HepG2 (cell line): ENCODE measurements at regions of chr2 and their contacts with region 1.

Region 1: DNA sequence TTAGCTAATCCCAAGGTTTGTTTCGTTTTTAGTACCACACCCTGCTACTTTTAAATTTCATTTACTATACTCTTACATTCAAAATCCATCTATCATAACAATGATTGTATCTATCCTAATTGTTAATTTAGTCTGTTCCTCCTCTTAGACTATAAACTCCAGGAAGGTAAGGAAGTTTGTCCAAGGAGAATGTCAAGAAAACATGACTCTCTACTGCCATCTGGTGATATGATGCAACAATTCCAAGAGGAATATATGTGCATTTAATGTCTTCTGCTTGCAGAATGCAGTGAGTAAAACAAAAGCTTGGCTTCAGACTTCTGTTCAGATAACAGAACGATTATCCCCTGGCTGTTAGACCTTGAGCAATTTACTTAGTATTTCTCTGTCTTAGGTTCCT is 1267.1 kb downstream of the LRP1B start:
- DNase-seq: peak; percentile 51
- ATAC-seq: peak; percentile 79
- H3K4me3 ChIP-seq: no peak overlapping the region
- H3K27ac ChIP-seq: no peak overlapping the region
- H3K4me1 ChIP-seq: no peaks in the 10 kb centered on the region
- H3K27me3 ChIP-seq: no peaks in the 10 kb centered on the region
- CTCF ChIP-seq: peak; percentile 81
- EP300 ChIP-seq: no peak
- POLR2A ChIP-seq: no peak
- RAD21 ChIP-seq: 0 out of 2 replicates have a peak, but pooled peaks have one; percentile 23

Region 2: GRCh38 chr2:138922973-138923563 is 1940.6 kb before region 1 on chr2:
- CTCF ChIA-PET with region 1: interaction called, 10 read pairs
- POLR2A ChIA-PET with region 1: no interaction called
- in situ Hi-C with region 1: no loop called
- intact Hi-C with region 1: loop called (anchors 2 kb)
- DNase-seq: peak; percentile 40
- ATAC-seq: peak; percentile 36; the same call in 2 of the 3 replicates
- H3K4me3 ChIP-seq: no peak overlapping the region
- H3K27ac ChIP-seq: no peak overlapping the region
- H3K4me1 ChIP-seq: no peaks in the 10 kb centered on the region
- H3K27me3 ChIP-seq: no peaks in the 10 kb centered on the region
- CTCF ChIP-seq: peak; percentile 59
- EP300 ChIP-seq: no peak
- POLR2A ChIP-seq: no peak
- RAD21 ChIP-seq: no peak

Region 3: DNA sequence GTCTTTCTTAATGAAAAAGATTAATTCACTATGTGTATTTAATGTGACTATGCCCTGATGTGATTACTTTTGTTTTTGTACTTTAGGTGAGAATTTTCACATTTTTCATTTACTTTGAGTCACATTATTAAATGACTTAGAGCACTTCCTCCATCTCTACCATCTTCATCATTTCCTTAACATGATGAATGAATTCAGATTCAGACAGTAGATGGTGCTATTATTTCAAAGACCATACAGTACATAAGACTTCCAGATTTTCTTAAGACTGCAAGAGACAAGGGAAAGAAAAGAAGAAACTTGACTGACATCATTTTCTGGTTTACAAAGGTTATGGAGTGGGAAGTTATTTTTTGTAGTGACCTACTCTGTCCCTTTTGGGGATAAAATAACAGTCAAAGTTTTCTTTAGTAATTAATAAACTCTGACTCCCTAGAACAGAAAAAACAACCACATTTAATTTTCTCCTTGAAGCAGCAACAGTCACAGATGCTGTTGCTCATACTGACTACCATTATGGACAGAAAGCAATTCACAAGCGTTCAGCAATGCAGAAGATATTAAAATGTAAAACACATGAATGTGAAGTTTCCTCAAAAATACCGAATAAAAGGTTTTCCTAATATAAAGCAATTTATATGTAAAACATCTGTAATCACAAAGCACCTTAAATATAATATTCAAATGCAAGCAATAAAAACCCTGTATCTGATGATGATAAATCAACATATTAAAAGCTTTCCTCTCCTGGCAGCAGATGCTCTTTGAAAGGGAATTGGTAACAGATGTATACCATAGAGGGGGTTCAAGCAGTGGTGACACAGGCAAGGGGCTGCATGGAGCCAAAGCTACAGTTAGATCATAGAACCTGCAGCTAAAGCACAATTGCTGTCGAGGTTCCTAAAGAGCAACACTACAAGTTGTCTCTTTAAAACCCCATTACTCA is 1072.6 kb before region 1 on chr2:
- CTCF ChIA-PET with region 1: no interaction called
- POLR2A ChIA-PET with region 1: no interaction called
- in situ Hi-C with region 1: loop called (anchors 25 kb)
- intact Hi-C with region 1: loop called (anchors 5 kb)
- DNase-seq: no peak
- ATAC-seq: peak; percentile 34; the same call in 1 of the 3 replicates
- H3K4me3 ChIP-seq: no peak overlapping the region
- H3K27ac ChIP-seq: no peak overlapping the region
- H3K4me1 ChIP-seq: no peaks in the 10 kb centered on the region
- H3K27me3 ChIP-seq: no peaks in the 10 kb centered on the region
- CTCF ChIP-seq: 0 out of 2 replicates have a peak, but pooled peaks have one; percentile 24
- EP300 ChIP-seq: no peak
- POLR2A ChIP-seq: no peak
- RAD21 ChIP-seq: no peak

Region 4: DNA sequence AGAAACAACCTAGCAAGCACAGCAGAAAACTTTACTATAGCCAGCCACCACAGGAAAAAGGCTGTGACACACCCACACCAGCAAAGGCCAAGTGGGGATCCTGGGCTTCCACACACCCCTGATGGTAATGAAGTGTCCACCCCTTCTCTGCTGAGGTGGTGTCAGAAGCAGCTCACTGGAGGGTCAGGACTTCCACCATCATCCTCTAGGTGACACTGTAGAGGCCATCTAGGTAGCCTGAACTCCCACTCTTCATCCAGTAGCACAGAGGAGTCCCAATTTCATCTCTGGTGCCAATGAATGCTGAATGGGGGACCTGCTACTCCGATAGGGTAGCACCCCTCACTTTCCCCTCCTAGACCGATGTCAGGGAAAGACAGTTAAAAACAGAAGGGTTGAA is 277.3 kb before region 1 on chr2:
- CTCF ChIA-PET with region 1: interaction called, 4 read pairs
- POLR2A ChIA-PET with region 1: no interaction called
- in situ Hi-C with region 1: no loop called
- intact Hi-C with region 1: loop called (anchors 1 kb)
- DNase-seq: peak; percentile 54
- ATAC-seq: peak; percentile 100
- H3K4me3 ChIP-seq: no peak overlapping the region
- H3K27ac ChIP-seq: no peak overlapping the region
- H3K4me1 ChIP-seq: no peaks in the 10 kb centered on the region
- H3K27me3 ChIP-seq: no peaks in the 10 kb centered on the region
- CTCF ChIP-seq: peak; percentile 86
- EP300 ChIP-seq: no peak
- POLR2A ChIP-seq: no peak
- RAD21 ChIP-seq: 0 out of 2 replicates have a peak, but pooled peaks have one; percentile 16

Region 5: DNA sequence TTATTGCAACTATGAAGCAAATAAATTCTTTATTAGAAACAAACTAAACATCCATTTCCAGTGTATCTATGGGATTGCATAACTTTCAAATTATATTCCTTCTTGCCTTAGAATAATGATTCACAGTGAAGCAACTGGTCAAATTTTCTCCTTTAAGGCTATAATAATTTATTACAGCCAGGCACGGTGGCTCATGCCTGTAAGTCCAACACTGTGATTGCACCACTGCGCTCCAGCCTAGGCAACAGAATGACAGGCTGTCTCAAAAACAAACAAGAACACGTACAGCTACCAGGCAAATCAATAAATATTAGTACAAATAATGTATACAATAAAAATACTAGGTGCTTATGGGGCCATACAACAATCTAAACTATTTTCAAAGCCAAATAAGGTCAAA is 149.1 kb before region 1 on chr2:
- CTCF ChIA-PET with region 1: no interaction called
- POLR2A ChIA-PET with region 1: no interaction called
- in situ Hi-C with region 1: no loop called
- intact Hi-C with region 1: no loop called
- DNase-seq: no peak
- ATAC-seq: no peak
- H3K4me3 ChIP-seq: no peak overlapping the region
- H3K27ac ChIP-seq: no peak overlapping the region
- H3K4me1 ChIP-seq: peaks cover 6% of the 10 kb centered on the region; the same call in 1 of the 2 replicates
- H3K27me3 ChIP-seq: no peaks in the 10 kb centered on the region
- CTCF ChIP-seq: no peak
- EP300 ChIP-seq: no peak
- POLR2A ChIP-seq: no peak
- RAD21 ChIP-seq: no peak

Region 6: DNA sequence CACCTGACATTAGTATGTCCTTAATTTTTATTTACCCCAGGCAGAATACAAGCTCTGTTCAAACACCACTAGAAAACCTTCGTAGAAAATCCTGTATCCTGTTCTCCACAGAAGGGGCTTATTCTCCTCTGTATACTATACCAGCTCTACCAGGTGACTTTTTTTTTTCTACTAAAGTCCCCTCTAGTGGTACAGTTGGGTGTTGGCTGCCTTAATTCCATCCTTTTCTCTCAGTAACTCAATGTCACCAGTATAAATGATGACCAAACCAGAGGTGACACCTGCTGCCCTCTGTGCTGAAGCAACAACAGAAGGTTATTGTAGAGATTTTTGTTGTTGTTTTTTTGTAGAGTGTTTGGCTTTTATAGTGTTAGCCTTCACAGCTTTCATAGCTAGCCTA is 54.9 kb before region 1 on chr2:
- CTCF ChIA-PET with region 1: no interaction called
- POLR2A ChIA-PET with region 1: no interaction called
- in situ Hi-C with region 1: no loop called
- intact Hi-C with region 1: no loop called
- DNase-seq: peak; percentile 8
- ATAC-seq: peak; percentile 90
- H3K4me3 ChIP-seq: no peak overlapping the region
- H3K27ac ChIP-seq: no peak overlapping the region
- H3K4me1 ChIP-seq: no peaks in the 10 kb centered on the region
- H3K27me3 ChIP-seq: no peaks in the 10 kb centered on the region
- CTCF ChIP-seq: no peak
- EP300 ChIP-seq: no peak
- POLR2A ChIP-seq: no peak
- RAD21 ChIP-seq: no peak

Region 7: DNA sequence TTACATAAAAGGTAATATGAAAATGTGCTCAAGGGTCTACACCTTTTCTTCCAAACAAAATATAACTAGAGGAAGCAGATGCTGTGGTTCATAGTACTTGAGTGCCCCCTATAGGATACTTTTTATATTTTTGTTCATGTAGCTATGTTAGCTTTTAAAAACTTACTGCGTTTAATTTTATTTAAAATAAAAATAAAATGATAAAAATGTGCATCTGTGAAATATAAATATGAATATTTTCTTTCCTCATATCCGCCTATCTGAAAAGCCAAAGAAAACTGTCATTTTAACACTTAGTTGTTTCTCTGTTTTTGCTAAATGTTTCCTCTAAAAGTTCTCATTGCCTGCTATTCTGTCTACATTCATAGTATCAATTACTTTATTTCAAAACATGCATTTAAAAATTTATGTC is 1276.7 kb after region 1 on chr2:
- CTCF ChIA-PET with region 1: no interaction called
- POLR2A ChIA-PET with region 1: no interaction called
- in situ Hi-C with region 1: no loop called
- intact Hi-C with region 1: loop called (anchors 1 kb)
- DNase-seq: peak; percentile 12
- ATAC-seq: peak; percentile 56; the same call in 2 of the 3 replicates
- H3K4me3 ChIP-seq: no peak overlapping the region
- H3K27ac ChIP-seq: no peak overlapping the region
- H3K4me1 ChIP-seq: no peaks in the 10 kb centered on the region
- H3K27me3 ChIP-seq: no peaks in the 10 kb centered on the region
- CTCF ChIP-seq: peak; percentile 57
- EP300 ChIP-seq: no peak
- POLR2A ChIP-seq: no peak
- RAD21 ChIP-seq: peak; percentile 54